BJ (cell line): ENCODE measurements at regions of chr10 and their contacts with region 1.

Region 1: DNA sequence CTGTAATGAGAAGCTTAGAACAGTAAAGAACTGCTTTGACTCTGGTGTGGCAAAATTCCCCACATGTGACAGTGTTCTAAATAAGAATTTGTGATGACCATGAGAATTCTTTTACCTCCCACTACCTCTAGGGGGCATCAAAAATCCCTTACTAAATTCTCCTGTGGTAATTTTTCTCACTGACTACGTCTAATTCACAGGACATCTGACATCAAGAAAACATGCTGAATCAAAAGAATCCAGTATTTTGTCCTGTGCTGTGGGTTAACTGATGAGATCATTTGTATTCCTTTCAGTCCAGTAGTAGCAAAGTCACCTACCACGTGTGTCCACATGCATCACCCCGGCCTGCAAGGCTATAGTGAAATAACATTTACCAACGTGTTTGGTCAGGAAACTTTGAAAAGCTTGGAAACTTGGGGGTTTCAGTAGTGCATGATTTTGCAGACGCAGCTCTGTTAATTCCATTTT is 103.8 kb downstream of the ATE1 start:
- DNase-seq: peak; percentile 6
- H3K4me3 ChIP-seq: no peak overlapping the region
- H3K27me3 ChIP-seq: no peaks in the 10 kb centered on the region
- CTCF ChIP-seq: peak; percentile 72

Region 2: DNA sequence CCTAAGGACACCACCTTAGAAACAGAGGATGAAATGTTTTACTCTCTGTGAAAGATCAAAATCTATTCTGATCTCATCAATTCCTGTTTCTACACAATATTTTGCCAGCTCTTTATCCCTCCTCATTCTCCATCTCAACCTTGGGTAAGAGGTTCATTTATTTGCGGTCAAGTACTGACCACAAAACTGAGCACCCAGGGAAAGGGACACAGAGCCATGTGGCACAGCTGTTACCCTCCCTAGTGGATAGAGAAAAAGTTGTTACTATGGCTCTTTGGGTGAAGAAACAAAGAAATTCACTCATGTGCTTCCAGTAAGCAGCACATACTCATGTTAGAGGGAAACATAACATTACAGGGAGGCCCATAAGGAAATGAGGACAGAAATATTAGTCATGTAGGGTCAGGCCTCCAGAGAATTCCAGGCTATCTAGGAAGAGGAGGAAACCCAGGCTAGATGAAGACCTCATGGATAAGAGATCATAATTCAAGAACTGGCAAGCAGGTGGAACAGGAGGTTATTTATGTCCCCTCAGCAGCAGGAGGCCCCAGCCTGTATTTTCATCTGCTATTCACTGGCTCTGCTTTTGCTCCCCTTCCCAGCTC is 10.7 kb before region 1 on chr10:
- CTCF ChIA-PET with region 1: interaction called, 33 read pairs
- POLR2A ChIA-PET with region 1: no interaction called
- DNase-seq: no peak
- H3K4me3 ChIP-seq: no peak overlapping the region
- H3K27me3 ChIP-seq: no peaks in the 10 kb centered on the region
- CTCF ChIP-seq: no peak

Region 3: GRCh38 chr10:121999318-121999717 is 175.3 kb after region 1 on chr10:
- CTCF ChIA-PET with region 1: no interaction called
- POLR2A ChIA-PET with region 1: no interaction called
- DNase-seq: peak; percentile 4
- H3K4me3 ChIP-seq: no peak overlapping the region
- H3K27me3 ChIP-seq: no peaks in the 10 kb centered on the region
- CTCF ChIP-seq: no peak